Caco-2 (cell line): ENCODE measurements at regions of chr17 and their contacts with region 1.

Region 1: GRCh38 chr17:57255776-57256681 is at the start of gene MSI2:
- DNase-seq: peak; percentile 90 to 94
- H3K4me3 ChIP-seq: peak within 1 kb of the TSS; percentile 73
- H3K4me3 Mint-ChIP-seq: peak within 1 kb of the TSS; percentile 95
- H3K27ac Mint-ChIP-seq: peak within 1 kb of the TSS; percentile 92
- H3K4me1 ChIP-seq: peaks cover 17% of the 10 kb centered on the region; the same call in 1 of the 2 replicates
- H3K4me1 Mint-ChIP-seq: peaks cover 23% of the 10 kb centered on the region
- H3K27me3 ChIP-seq: no peaks in the 10 kb centered on the region
- H3K27me3 Mint-ChIP-seq: no peaks in the 10 kb centered on the region
- CTCF ChIP-seq: no peak
- total RNA-seq, gene MSI2: 174 and 185 TPM in 2 replicates

Region 2: GRCh38 chr17:57268181-57268580 is 12.2 kb after region 1 on chr17:
- CTCF ChIA-PET with region 1: interaction called, 3 read pairs
- POLR2A ChIA-PET with region 1: interaction called, 8 read pairs
- intact Hi-C with region 1: loop called (anchors 1 kb)
- DNase-seq: peak; percentile 73 to 82
- H3K4me3 ChIP-seq: no peak overlapping the region
- H3K4me3 Mint-ChIP-seq: peak overlapping the region; percentile 32
- H3K27ac Mint-ChIP-seq: peak overlapping the region; percentile 72
- H3K4me1 ChIP-seq: peaks cover 50% of the 10 kb centered on the region
- H3K4me1 Mint-ChIP-seq: peaks cover 53% of the 10 kb centered on the region
- H3K27me3 ChIP-seq: no peaks in the 10 kb centered on the region
- H3K27me3 Mint-ChIP-seq: no peaks in the 10 kb centered on the region
- CTCF ChIP-seq: no peak

Region 3: DNA sequence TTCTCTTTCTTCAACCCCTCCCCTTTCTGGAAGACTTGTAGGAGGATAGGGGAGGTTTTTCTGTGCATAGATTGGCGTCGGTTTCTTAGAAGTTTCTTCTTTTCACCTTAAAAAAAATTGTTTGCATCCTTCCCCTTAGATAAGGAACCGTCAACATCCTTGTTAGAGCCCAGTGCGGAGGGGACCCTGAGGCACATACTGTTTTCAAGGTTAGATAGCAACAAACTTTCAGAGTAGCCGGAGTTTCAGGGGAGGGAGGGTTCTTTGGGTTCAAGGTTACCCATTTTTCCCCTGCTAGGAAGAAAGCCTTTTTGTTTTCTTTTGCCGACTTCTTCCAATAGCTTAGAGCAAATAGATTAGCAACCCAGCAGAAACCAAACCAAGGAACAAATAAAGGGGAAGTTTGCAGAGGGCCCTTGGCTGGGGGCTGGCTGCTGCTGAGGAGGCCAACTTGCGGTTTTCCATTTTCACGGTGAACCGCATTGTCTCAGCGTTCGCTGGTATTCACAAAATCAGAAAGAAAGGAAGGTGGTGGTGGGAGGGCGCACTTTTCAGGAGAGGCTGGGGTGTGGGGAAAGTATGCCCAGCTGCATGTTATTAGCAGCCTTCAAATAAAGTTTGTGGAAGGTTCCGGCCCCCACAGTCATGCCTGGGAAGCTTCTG is 29.1 kb after region 1 on chr17:
- CTCF ChIA-PET with region 1: no interaction called
- POLR2A ChIA-PET with region 1: interaction called, 12 read pairs
- intact Hi-C with region 1: no loop called
- DNase-seq: no peak
- H3K4me3 ChIP-seq: no peak overlapping the region
- H3K4me3 Mint-ChIP-seq: no peak overlapping the region
- H3K27ac Mint-ChIP-seq: no peak overlapping the region
- H3K4me1 ChIP-seq: peaks cover 21% of the 10 kb centered on the region
- H3K4me1 Mint-ChIP-seq: peaks cover 23% of the 10 kb centered on the region
- H3K27me3 ChIP-seq: no peaks in the 10 kb centered on the region
- H3K27me3 Mint-ChIP-seq: no peaks in the 10 kb centered on the region
- CTCF ChIP-seq: no peak

Region 4: DNA sequence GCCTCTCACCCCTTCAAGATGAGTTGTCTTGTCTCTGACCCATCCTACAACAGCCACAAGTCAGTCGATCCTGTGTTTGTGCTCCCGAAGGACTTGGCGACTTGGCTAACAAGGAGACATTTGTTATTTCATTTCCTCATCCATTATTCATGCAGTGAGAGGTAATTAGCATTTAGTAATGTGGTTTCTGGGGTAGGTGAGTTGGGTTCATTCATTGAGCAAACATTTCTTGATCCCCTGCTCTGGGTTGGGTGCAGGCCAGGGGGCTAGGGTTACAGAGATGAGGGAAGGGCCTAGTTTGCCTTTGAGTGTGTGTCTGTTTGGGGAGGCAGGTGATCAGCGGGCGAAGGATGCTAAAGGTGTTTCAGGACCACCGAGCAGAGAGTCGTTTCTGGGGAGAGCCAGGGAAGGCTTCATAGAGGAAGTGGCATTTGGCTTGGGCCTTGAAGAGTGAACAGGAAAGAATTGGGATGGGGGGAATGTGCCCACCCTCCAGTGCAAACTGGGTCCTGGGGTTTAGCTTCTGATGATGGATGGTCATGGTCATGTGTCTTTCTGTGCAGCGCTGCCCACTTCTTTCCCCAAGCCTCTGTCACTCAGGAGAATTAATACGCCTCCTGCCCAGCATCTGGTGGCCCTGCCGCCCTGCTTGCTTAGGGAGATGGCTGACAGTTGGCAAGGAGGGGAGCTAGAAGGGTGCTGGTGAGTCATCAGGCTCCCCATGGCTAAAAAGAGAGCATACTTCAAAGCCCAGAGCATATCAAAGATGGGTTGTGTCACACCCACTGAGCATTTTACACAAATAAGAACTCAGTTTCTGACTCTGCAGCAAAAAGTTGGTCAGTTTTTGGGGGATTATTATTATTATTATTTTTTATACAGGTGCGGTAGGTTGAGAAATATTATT is 38.9 kb after region 1 on chr17:
- CTCF ChIA-PET with region 1: no interaction called
- POLR2A ChIA-PET with region 1: interaction called, 7 read pairs
- intact Hi-C with region 1: loop called (anchors 2 kb)
- DNase-seq: peak; percentile 35 to 62
- H3K4me3 ChIP-seq: no peak overlapping the region
- H3K4me3 Mint-ChIP-seq: peak overlapping the region; percentile 34
- H3K27ac Mint-ChIP-seq: peak overlapping the region; percentile 86
- H3K4me1 ChIP-seq: peaks cover 48% of the 10 kb centered on the region
- H3K4me1 Mint-ChIP-seq: peaks cover 57% of the 10 kb centered on the region
- H3K27me3 ChIP-seq: no peaks in the 10 kb centered on the region
- H3K27me3 Mint-ChIP-seq: no peaks in the 10 kb centered on the region
- CTCF ChIP-seq: no peak